Right cardiac atrium (tissue), 5 donors: ENCODE measurements at regions of chr11 and their contacts with region 1.

Region 1: DNA sequence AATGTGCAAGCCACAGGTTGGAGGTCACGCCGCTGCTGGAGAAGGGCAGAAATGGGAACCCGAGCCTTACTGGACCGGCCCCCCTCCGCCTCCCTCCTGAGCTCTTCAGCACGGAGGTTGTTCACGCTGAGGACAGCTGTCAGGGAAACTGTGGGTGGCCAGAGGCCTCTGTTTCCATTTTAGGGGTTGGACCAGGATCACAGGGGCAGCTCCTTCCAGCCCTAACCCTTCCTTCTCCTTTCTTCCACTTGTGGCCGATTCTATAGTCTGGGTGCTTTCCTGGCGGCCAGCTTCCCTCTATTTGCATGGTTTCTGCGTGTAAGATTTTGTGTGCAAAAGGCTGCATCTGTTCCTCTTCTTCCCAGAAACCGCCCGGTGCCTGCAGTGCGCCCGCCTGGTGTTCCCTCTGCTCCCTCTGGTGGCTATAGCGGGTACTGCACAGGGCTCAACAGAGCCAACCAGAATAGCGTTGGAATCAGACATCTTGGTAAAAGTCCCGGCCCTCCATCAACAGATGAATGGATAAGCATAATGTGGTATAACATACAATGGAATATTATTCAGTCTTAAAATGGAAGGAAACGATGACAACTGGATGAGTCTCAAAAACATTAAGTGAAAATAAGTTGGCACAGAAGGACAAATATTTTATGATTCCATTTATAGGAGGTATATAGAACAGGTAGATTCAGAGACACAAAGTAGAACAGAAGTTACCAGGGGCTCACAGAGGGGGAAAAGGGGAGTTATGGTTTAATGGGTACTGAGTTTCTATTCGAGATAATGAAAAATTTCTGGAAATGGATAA is 8.4 kb upstream of the SLC22A8 start:
- DNase-seq: peak; percentile 84 to 96 (median 92)
- ATAC-seq: peak; percentile 88 to 89
- H3K4me3 ChIP-seq: no peak overlapping the region
- H3K27ac ChIP-seq: no peak overlapping the region
- H3K4me1 ChIP-seq: peaks cover 2% of the 10 kb centered on the region
- H3K27me3 ChIP-seq: no peaks in the 10 kb centered on the region

Region 2: DNA sequence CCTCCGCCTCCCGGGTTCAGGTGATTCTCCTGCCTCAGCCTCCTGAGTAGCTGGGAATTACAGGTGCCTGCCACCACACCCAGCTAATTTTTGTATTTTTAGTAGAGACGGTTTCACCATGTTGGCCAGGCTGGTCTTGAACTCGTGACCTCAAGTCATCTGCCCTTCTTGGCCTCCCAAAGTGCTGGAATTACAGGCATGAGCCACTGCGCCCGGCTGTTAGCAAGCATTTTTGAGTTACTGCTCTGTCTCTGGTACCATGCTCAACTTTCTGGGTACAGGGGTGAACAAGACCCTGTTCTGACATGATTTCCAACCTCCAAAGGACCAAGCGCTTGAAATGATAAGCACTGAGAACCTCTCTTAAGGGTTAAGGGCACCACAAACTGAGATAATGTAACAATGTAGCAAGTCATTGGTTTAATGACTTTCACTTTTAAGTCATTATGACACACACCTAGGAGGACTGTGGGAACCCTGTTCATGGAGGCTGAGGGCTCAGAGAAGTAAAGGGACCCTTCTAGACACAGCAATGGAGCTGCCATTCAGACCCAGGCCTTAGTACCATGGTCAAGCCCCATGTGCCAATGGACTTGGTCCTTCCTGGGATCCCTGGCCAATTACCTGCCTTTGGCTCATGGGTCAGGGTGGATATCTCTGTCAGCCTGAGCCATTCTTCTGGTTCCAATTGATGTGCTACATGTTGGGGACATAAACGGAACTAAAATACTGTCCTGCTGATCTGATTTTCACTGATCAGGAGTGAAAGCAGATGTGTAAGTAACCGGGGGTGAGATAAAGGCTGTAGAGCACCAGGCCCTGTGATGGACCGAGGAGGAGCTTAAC is 131.7 kb before region 1 on chr11:
- intact Hi-C with region 1: no loop called
- DNase-seq: no peak
- ATAC-seq: no peak
- H3K4me3 ChIP-seq: no peak overlapping the region
- H3K27ac ChIP-seq: no peak overlapping the region
- H3K4me1 ChIP-seq: peaks cover 8% of the 10 kb centered on the region
- H3K27me3 ChIP-seq: no peaks in the 10 kb centered on the region

Region 3: GRCh38 chr11:62905927-62906531 is 118.0 kb before region 1 on chr11:
- intact Hi-C with region 1: loop called (anchors 1 to 2 kb)
- DNase-seq: peak; percentile 71 to 89 (median 88)
- ATAC-seq: peak; percentile 74 to 77
- H3K4me3 ChIP-seq: no peak overlapping the region
- H3K27ac ChIP-seq: peak overlapping the region; percentile 43
- H3K4me1 ChIP-seq: no peaks in the 10 kb centered on the region
- H3K27me3 ChIP-seq: no peaks in the 10 kb centered on the region